Activated naive CD4-positive, alpha-beta T cell treated with anti-CD3 and anti-CD28 coated beads for 36 hours (primary cell): ENCODE measurements at regions of chr10 and their contacts with region 1.

Region 1: DNA sequence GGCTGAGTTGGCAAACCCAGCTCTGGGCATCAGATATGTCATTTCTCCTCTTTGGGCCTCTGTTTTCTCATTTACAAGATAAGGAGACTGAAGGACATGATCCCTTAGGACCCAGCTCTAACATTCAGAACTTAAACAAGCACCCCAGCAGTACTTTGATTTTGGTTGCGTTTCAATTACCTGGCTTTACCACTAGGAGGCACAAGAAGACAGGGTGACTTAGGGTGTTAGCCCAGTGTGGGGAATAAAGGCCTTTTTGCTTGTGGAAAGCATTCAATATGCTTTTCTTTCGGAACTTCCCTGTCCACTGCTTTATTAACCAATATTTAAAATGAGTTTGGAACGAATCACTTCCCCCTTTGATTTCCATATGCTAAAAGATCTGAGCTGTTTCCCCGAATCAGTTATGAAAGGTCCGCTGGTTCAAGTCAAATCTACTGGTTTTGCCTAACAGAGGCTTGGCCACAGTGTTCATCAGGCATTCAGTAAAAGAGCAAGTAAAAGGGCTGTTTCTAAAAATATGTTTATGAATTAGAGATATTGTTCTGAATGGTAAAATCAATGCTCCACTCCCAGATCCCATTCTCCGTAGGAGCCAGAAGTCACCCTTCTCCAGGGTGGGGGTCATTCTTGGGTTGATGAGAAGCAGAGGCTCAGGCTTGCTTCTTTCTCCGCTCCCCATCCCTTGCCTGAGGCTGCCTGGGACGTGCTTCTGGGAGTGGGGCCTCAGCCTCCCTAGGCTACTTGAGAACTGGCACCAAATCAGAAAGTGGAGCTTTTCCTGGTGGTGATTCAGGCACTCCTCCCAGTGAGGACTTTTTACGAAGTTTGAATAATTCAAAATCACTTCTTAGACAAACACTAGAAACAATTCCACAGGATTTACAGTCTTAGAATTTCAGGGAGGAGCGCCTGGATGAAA is 105.5 kb downstream of the MYOF start:
- DNase-seq: peak; percentile 62
- H3K4me3 Mint-ChIP-seq: no peak overlapping the region
- H3K27ac Mint-ChIP-seq: no peak overlapping the region
- H3K4me1 Mint-ChIP-seq: peaks cover 35% of the 10 kb centered on the region
- H3K27me3 Mint-ChIP-seq: peaks cover 5% of the 10 kb centered on the region

Region 2: GRCh38 chr10:93386631-93387369 is 10.2 kb after region 1 on chr10:
- CTCF ChIA-PET with region 1: interaction called, 25 read pairs
- intact Hi-C with region 1: no loop called
- DNase-seq: peak; percentile 41
- H3K4me3 Mint-ChIP-seq: no peak overlapping the region
- H3K27ac Mint-ChIP-seq: peak overlapping the region; percentile 50
- H3K4me1 Mint-ChIP-seq: peaks cover 26% of the 10 kb centered on the region
- H3K27me3 Mint-ChIP-seq: no peaks in the 10 kb centered on the region

Region 3: DNA sequence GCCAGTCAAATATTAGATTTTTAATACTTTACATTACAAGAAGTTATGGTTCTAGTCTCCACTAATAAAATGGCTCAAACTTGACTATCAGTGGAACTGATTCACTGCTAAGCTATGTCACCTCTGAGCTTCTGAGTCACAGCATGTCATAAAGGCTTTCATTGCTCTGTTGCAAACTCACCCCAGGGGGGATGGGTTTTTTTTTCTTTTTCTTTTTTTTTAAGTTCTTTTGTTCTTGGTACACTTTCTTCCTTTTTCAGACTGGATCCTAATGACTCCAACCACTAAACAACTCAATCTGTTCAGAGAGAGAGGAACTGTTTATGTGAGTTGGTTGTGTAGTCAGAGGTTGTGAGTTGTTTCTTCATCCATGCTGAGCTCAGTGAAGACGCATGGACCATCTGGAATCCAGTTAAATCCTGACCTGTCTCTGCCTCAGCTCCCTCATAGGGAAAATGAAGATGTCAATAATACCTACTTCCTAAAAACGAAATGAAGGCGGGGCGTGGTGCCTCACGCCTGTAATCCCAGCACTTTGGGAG is 94.5 kb after region 1 on chr10:
- CTCF ChIA-PET with region 1: interaction called, 19 read pairs
- intact Hi-C with region 1: no loop called
- DNase-seq: peak; percentile 18
- H3K4me3 Mint-ChIP-seq: no peak overlapping the region
- H3K27ac Mint-ChIP-seq: no peak overlapping the region
- H3K4me1 Mint-ChIP-seq: peaks cover 18% of the 10 kb centered on the region
- H3K27me3 Mint-ChIP-seq: no peaks in the 10 kb centered on the region

Region 4: GRCh38 chr10:93496322-93497041 is 119.8 kb after region 1 on chr10 and contains the start of gene CEP55:
- CTCF ChIA-PET with region 1: interaction called, 30 read pairs
- intact Hi-C with region 1: loop called (anchors 5 kb)
- DNase-seq: peak; percentile 96
- H3K4me3 Mint-ChIP-seq: peak within 1 kb of the TSS; percentile 90
- H3K27ac Mint-ChIP-seq: peak within 1 kb of the TSS; percentile 63
- H3K4me1 Mint-ChIP-seq: peaks cover 18% of the 10 kb centered on the region
- H3K27me3 Mint-ChIP-seq: peaks cover 7% of the 10 kb centered on the region
- total RNA-seq, gene CEP55: 64.4 to 68.2 TPM

Region 5: GRCh38 chr10:93515071-93516005 is 138.7 kb after region 1 on chr10:
- CTCF ChIA-PET with region 1: interaction called, 36 read pairs
- intact Hi-C with region 1: loop called (anchors 1 kb)
- DNase-seq: no peak
- H3K4me3 Mint-ChIP-seq: no peak overlapping the region
- H3K27ac Mint-ChIP-seq: no peak overlapping the region
- H3K4me1 Mint-ChIP-seq: no peaks in the 10 kb centered on the region
- H3K27me3 Mint-ChIP-seq: peaks cover 2% of the 10 kb centered on the region

Region 6: DNA sequence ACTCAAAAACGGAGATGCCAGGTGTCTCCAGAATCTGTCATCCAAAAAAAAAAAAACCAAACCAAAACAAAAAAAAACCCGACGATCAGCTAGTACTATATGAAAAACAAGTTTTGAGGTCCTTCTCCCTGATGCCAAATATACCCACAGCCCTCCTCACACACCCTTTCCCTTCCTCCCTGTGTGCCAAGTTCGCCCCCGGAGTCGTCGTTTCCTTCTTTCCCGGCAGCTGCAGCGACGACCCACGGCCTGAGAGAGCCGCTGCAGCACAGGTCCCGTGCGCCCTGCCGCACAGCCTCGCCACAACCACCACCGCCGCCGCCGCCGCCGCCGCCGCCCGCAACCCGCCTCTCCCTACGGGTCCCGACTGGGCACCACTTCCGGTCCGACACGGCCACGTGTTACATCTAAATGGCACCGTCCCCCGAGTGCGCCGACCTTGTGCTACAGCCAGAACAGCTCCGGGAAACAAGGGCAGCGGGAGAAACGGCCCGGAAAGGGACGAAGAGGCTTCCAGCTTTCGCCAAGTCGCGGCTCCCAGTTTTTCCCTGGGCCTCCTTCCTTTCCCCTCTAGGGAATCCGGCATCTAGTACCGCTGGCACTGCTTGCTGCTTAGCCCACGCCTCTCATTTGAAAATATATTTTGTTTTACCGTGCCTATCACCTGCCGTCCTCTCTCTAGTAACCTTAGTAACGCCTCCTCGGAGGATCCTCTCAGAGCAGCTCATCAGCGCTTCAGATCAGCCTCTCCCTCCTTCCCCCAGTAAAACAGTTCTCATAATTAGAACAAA is 325.8 kb after region 1 on chr10 and contains the start of gene FRA10AC1:
- CTCF ChIA-PET with region 1: no interaction called
- intact Hi-C with region 1: loop called (anchors 5 kb)
- DNase-seq: peak; percentile 91
- H3K4me3 Mint-ChIP-seq: no peak within 1 kb of the TSS
- H3K27ac Mint-ChIP-seq: no peak within 1 kb of the TSS
- H3K4me1 Mint-ChIP-seq: peaks cover 15% of the 10 kb centered on the region
- H3K27me3 Mint-ChIP-seq: no peaks in the 10 kb centered on the region
- total RNA-seq, gene FRA10AC1: 24.5 to 25.0 TPM

Region 7: DNA sequence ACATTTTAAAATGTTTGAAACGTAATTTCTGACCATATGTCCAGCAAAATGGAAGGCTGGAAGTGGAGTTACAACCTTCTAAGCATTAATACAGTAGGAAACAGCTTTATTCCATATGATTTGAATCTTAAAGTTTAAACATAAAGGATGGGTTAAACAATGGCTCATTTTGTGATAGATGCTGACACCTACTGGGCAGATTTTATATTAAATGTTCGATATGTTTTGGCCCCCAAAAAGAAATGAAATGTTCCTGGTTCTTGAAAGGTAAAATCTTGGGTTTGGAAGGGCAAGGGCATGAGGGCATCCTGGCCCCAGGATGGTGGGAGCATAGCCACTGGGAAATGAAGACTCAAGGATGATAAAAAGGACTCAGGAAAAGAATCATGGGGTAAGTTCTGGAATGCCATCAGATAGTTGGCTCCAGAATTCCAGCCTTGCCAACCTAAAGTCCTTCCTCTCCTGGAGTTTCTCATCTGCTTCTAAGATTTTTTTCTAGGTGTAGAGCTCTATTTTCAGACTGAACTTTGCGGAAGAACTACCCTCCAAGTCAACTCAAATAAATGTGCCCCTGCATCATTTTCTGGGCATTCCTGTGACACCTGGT is 482.5 kb after region 1 on chr10:
- CTCF ChIA-PET with region 1: no interaction called
- intact Hi-C with region 1: loop called (anchors 1 kb)
- DNase-seq: no peak
- H3K4me3 Mint-ChIP-seq: no peak overlapping the region
- H3K27ac Mint-ChIP-seq: no peak overlapping the region
- H3K4me1 Mint-ChIP-seq: no peaks in the 10 kb centered on the region
- H3K27me3 Mint-ChIP-seq: peaks cover 2% of the 10 kb centered on the region